Right ventricle myocardium inferior (tissue), 1 donor: ENCODE measurements at regions of chr7 and their contacts with region 1.

Region 1: DNA sequence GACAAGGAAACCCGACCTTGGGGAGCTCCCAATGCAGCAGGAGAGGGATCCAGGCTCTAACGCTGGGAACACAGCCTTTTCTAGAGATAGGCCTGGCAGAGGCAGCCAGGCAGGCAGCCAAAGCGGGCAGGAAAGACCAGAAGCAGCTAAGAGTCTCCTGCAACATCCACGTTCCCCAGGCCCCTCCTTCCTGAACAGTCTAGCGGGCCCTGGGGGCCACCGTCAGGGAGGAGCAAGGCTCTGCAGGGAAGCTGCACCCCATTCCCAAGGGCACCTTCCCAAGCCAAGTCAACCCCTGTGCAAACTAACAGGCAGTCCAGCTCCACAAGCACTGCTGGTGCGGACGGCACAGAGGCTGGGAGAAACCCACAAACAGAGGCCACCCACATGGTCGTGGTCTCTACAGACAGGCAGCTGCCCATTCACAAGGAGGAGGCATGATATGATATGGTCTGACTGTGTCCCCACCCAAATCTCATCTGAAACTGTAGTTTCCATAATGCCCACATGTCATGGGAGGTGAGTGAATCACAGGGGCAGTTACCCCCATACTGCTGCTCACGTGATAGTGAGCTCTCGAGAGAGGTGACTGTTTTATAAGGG is 115.7 kb downstream of the MAD1L1 start:
- DNase-seq: peak; percentile 83
- ATAC-seq: peak; percentile 59

Region 2: DNA sequence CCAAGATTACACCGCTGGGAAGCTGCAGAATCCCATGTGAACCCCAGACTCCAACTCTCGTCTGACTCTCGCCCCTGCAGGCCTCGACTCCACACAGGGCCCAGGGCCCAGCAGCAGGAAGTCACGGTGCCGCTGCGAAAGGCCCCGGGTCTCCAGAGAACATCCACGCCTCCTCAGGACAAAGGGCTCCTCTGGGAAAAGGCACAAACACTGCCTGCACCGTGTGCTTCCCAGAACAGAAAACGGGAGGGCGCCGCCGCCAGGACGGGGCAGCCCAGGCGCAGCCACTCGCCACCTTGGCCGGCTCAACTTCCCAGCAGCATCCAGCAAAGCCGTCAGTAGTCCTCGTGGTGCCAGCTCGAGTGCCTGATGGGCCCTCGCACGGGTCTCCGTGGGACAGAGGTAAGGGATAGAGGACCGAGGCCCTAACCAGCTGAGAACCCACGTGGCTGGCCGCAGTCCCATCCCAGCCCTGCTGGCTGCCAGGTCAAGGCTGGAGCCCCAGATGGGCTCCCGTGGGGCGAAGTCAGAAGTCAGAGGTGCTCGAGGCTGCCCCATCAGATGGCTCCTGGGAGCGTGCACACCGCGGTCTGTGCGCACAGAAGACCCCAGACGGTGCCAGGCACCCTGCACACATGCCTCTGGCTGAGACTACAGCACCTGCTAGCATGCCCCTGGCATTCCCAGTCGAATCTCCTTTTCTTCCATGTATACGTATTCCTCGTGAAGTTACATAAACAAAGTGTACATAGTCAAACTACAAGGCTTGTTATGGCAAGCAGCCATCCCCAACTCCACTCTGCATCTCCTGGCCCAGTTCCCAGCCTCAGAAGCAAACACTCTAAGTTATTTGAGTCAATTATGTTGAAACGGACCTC is 55.5 kb after region 1 on chr7:
- intact Hi-C with region 1: loop called (anchors 5 kb)
- DNase-seq: no peak
- ATAC-seq: peak; percentile 9